ENCODE measurements at regions of chr7 and their contacts with region 1.

Region 1: GRCh38 chr7:40232242-40232893 is 97.6 kb downstream of the SUGCT start:
- DNase-seq: peak in 5 of 7 donors; percentile 10 to 55 (median 29)
- H3K4me3 ChIP-seq: no peak overlapping the region
- H3K27ac ChIP-seq: no peak overlapping the region
- H3K4me1 ChIP-seq: no peaks in the 10 kb centered on the region
- H3K27me3 ChIP-seq: no peaks in the 10 kb centered on the region
- CTCF ChIP-seq: peak; percentile 38 to 73 (median 59)
- POLR2A ChIP-seq: no peak

Region 2: DNA sequence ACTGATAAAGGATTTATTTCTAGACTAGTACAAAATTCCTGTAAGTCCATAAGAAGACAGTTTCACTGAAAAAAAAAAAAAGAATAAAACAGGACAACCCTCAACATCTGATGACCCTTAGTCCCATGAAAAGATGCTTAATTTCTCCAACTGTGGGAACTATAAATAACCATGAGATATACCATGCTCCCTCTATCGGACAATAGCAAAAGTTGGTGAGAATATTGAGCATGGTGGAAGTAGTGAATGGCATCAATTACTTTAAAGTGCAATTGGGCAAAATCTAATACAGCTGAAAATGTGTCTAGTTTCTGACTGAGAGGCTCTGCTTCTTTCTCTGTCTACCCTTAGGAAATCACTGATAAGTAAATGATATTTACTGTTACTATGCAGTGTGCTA is 251.3 kb after region 1 on chr7:
- intact Hi-C with region 1: no loop called
- DNase-seq: no peak
- H3K4me3 ChIP-seq: no peak overlapping the region
- H3K27ac ChIP-seq: no peak overlapping the region
- H3K4me1 ChIP-seq: no peaks in the 10 kb centered on the region
- H3K27me3 ChIP-seq: no peaks in the 10 kb centered on the region
- CTCF ChIP-seq: no peak
- POLR2A ChIP-seq: no peak

Region 3: DNA sequence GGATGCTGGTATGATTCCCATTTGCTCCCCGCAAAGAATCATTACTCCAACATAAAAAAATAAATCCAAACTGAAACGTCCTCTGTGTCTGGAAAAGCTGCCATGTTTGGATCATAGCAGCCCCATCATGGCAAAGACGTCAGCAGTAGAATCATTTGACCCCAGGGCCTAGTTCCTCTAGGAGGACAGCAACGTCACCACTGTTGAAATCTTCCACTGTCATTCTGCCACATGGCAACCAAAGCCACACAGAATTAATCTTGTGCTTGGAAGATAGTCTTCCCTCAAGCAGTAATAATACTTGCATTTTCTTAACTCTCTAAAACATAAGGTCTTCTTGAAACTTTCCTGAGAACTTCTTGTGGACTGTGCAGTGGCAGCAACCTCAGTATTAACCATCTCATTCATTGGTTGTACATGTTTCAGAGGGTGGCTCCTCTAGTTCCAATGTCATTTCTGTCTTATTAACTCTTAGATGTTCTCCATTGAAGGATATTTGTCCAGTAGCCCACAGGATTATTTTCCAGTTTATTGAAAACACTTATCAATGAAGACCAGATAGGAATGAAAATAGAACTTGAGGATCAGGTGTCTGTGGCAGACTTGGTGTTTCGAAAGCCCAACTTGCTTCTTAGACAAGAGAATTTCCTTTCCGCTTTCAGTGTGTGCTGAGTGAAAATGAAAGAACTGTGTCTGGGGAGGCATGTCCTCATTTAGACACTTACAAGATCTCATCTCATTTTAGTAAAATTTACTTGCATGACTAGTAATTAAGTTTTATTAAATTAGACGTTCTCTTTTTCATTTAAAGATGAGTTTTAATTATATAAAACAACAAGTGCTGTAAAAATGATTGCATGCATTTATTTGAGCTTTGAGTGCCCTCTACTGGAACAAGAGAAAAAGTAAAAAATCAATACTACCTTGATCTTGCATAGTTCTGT is 1499.4 kb after region 1 on chr7:
- intact Hi-C with region 1: loop called in 1 of 2 experiments (anchors 5 kb)
- DNase-seq: no peak
- H3K4me3 ChIP-seq: no peak overlapping the region
- H3K27ac ChIP-seq: no peak overlapping the region
- H3K4me1 ChIP-seq: no peaks in the 10 kb centered on the region
- H3K27me3 ChIP-seq: no peaks in the 10 kb centered on the region
- CTCF ChIP-seq: peak; percentile 21 to 56 (median 40)
- POLR2A ChIP-seq: no peak

Measured in adrenal gland (tissue), 19 donors.